ENCODE measurements at regions of chr4 and their contacts with region 1.

Region 1: GRCh38 chr4:140523857-140524742 is at the start of gene ELMOD2:
- DNase-seq: peak; percentile 98
- ATAC-seq: peak; percentile 99
- H3K4me3 ChIP-seq: peak within 1 kb of the TSS; percentile 65 to 89 (median 78)
- H3K4me3 Mint-ChIP-seq: peak within 1 kb of the TSS; percentile 91
- H3K27ac ChIP-seq: peak within 1 kb of the TSS; percentile 59 to 71
- H3K27ac Mint-ChIP-seq: peak within 1 kb of the TSS; percentile 86
- H3K4me1 ChIP-seq: peaks cover 12 to 13% of the 10 kb centered on the region in 2 donors
- H3K4me1 Mint-ChIP-seq: peaks cover 16% of the 10 kb centered on the region
- H3K27me3 ChIP-seq: no peaks in the 10 kb centered on the region
- H3K27me3 Mint-ChIP-seq: no peaks in the 10 kb centered on the region
- CTCF ChIP-seq: peak; percentile 92
- total RNA-seq, gene ELMOD2: 23.4 and 25.3 TPM in 2 replicates

Region 2: GRCh38 chr4:139015269-139015947 is 1508.7 kb before region 1 on chr4 and contains the start of gene NOCT:
- CTCF ChIA-PET with region 1: no interaction called
- POLR2A ChIA-PET with region 1: no interaction called
- intact Hi-C with region 1: loop called (anchors 5 kb)
- DNase-seq: peak; percentile 97
- ATAC-seq: peak; percentile 92
- H3K4me3 ChIP-seq: peak within 1 kb of the TSS; percentile 56 to 86 (median 78)
- H3K4me3 Mint-ChIP-seq: peak within 1 kb of the TSS; percentile 92
- H3K27ac ChIP-seq: peak within 1 kb of the TSS; percentile 88 to 98
- H3K27ac Mint-ChIP-seq: peak within 1 kb of the TSS; percentile 98
- H3K4me1 ChIP-seq: peaks cover 14 to 18% of the 10 kb centered on the region in 2 donors
- H3K4me1 Mint-ChIP-seq: peaks cover 28% of the 10 kb centered on the region
- H3K27me3 ChIP-seq: no peaks in the 10 kb centered on the region
- H3K27me3 Mint-ChIP-seq: no peaks in the 10 kb centered on the region
- CTCF ChIP-seq: no peak
- total RNA-seq, gene NOCT: 2.6 and 3.0 TPM in 2 replicates

Region 3: GRCh38 chr4:139554893-139555704 is 969.0 kb before region 1 on chr4:
- CTCF ChIA-PET with region 1: no interaction called
- POLR2A ChIA-PET with region 1: no interaction called
- intact Hi-C with region 1: loop called (anchors 5 kb)
- DNase-seq: peak; percentile 91
- ATAC-seq: peak; percentile 60
- H3K4me3 ChIP-seq: peak overlapping the region; percentile 73 to 96 (median 89)
- H3K4me3 Mint-ChIP-seq: peak overlapping the region; percentile 100
- H3K27ac ChIP-seq: peak overlapping the region; percentile 93 to 98
- H3K27ac Mint-ChIP-seq: peak overlapping the region; percentile 100
- H3K4me1 ChIP-seq: peaks cover 29 to 31% of the 10 kb centered on the region in 2 donors
- H3K4me1 Mint-ChIP-seq: peaks cover 63% of the 10 kb centered on the region
- H3K27me3 ChIP-seq: no peaks in the 10 kb centered on the region
- H3K27me3 Mint-ChIP-seq: no peaks in the 10 kb centered on the region
- CTCF ChIP-seq: no peak

Region 4: DNA sequence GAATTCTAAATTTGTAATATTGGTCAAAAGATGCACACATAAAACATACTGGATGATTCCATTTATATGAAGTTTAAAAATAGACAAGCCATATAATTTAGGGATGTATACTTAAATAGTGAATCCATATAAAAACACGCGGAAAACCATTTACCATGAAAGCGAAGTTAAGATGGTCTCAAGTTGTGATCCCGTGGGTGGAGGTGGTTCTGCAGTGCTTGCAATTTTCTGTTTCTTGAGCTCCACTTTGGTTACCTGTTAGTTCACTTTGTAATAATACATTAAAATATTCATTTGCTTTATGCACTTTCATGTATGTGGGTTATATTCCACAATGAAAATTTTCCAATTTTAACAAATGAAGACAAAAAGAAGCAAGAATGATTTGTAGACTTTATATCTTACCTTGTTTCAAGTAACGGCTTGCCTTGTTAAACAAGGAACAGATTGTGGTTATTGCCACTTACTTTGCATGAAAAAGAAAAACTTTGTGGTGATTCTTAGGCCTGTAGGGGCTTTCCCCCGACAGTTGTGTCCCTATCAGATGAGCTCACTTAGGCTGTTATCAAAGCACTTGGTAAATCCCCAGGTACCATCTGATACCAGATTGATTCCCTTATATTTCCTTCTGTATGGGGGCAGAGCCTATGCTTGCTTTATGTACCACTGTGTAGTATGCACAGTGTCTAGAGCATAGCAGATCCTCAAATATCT is 32.4 kb after region 1 on chr4:
- CTCF ChIA-PET with region 1: interaction called, 3 read pairs
- POLR2A ChIA-PET with region 1: no interaction called
- intact Hi-C with region 1: loop called (anchors 1 kb)
- DNase-seq: peak; percentile 82
- ATAC-seq: peak; percentile 95
- H3K4me3 ChIP-seq: no peak overlapping the region
- H3K4me3 Mint-ChIP-seq: peak overlapping the region; percentile 5
- H3K27ac ChIP-seq: no peak overlapping the region
- H3K27ac Mint-ChIP-seq: no peak overlapping the region
- H3K4me1 ChIP-seq: peaks cover 16% of the 10 kb centered on the region in 2 donors
- H3K4me1 Mint-ChIP-seq: peaks cover 20% of the 10 kb centered on the region
- H3K27me3 ChIP-seq: peaks cover 0 to 35% (median 24%) of the 10 kb centered on the region in 4 experiments
- H3K27me3 Mint-ChIP-seq: peaks cover 35% of the 10 kb centered on the region
- CTCF ChIP-seq: no peak

Region 5: GRCh38 chr4:140602714-140603113 is 78.6 kb after region 1 on chr4:
- CTCF ChIA-PET with region 1: no interaction called
- POLR2A ChIA-PET with region 1: no interaction called
- intact Hi-C with region 1: no loop called
- DNase-seq: no peak
- ATAC-seq: no peak
- H3K4me3 ChIP-seq: no peak overlapping the region
- H3K4me3 Mint-ChIP-seq: no peak overlapping the region
- H3K27ac ChIP-seq: no peak overlapping the region
- H3K27ac Mint-ChIP-seq: no peak overlapping the region
- H3K4me1 ChIP-seq: no peaks in the 10 kb centered on the region
- H3K4me1 Mint-ChIP-seq: no peaks in the 10 kb centered on the region
- H3K27me3 ChIP-seq: peaks cover 0 to 3% (median 0%) of the 10 kb centered on the region in 4 experiments
- H3K27me3 Mint-ChIP-seq: peaks cover 41% of the 10 kb centered on the region
- CTCF ChIP-seq: no peak

Region 6: GRCh38 chr4:140743194-140743931 is 219.3 kb after region 1 on chr4:
- CTCF ChIA-PET with region 1: no interaction called
- POLR2A ChIA-PET with region 1: no interaction called
- intact Hi-C with region 1: loop called (anchors 10 kb)
- DNase-seq: peak; percentile 83
- ATAC-seq: peak; percentile 72
- H3K4me3 ChIP-seq: peak overlapping the region; percentile 7 to 59 (median 31)
- H3K4me3 Mint-ChIP-seq: peak overlapping the region; percentile 82
- H3K27ac ChIP-seq: peak overlapping the region; percentile 89 to 91
- H3K27ac Mint-ChIP-seq: peak overlapping the region; percentile 94
- H3K4me1 ChIP-seq: peaks cover 71 to 76% of the 10 kb centered on the region in 2 donors
- H3K4me1 Mint-ChIP-seq: peaks cover 87% of the 10 kb centered on the region
- H3K27me3 ChIP-seq: no peaks in the 10 kb centered on the region
- H3K27me3 Mint-ChIP-seq: no peaks in the 10 kb centered on the region
- CTCF ChIP-seq: peak; percentile 59

Region 7: DNA sequence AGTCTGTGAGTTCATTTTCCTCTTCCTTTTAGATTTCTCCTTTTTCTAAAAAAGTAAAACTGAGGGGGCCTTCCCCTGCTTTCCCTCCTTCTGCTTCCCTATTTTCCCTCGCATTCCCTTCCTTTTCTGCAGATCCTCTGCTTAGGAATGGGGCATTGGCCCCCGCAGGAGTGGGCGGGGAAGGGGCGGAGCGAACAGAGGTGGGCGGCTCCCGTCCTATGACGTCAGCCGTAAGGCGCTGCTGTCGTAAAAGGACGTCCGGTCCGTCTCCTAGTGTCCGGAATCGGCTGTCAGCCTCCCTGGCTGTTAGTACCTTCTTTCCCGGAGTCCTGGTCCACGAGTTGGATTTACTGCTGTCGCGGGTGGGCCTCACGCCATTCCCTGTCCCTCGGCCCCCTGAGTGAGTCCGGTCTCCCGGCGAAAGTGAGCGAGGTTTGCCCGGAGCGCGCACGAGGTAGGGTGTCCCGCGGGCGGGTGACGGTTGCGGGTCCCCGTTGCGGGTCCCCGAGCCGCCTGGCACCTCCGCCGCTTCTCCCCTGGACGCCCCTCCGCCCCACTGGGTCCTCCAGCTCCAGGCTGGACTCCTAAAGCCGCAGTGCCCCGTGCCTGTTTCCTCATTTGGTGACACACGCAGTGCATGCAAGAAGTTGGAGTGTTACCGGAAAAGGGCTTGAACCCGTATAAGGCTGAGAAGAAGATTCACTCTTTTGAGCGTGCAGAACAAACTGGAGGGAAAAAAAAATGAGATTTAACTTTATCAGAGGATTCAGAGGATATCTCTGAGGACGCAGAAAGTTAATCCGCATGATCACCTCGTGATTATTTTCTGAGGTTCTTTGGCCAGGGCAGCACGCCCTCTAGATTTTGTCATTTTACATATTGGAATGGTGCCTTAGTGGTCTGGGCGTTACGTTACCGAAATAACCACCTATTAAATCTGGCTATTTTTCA is 696.8 kb after region 1 on chr4 and contains the start of gene ZNF330:
- CTCF ChIA-PET with region 1: no interaction called
- POLR2A ChIA-PET with region 1: no interaction called
- intact Hi-C with region 1: loop called (anchors 10 kb)
- DNase-seq: peak; percentile 92
- ATAC-seq: peak; percentile 92
- H3K4me3 ChIP-seq: peak within 1 kb of the TSS; percentile 93 to 99 (median 98)
- H3K4me3 Mint-ChIP-seq: peak within 1 kb of the TSS; percentile 91
- H3K27ac ChIP-seq: peak within 1 kb of the TSS; percentile 84 to 87
- H3K27ac Mint-ChIP-seq: peak within 1 kb of the TSS; percentile 88
- H3K4me1 ChIP-seq: peaks cover 10 to 18% of the 10 kb centered on the region in 2 donors
- H3K4me1 Mint-ChIP-seq: peaks cover 31% of the 10 kb centered on the region
- H3K27me3 ChIP-seq: peaks cover 0 to 4% (median 0%) of the 10 kb centered on the region in 4 experiments
- H3K27me3 Mint-ChIP-seq: peaks cover 6% of the 10 kb centered on the region
- CTCF ChIP-seq: no peak
- total RNA-seq, gene ZNF330: 29.4 and 36.7 TPM in 2 replicates

Measured in B cell (primary cell).